ENCODE measurements at regions of chr15 and their contacts with region 1.

Region 1: GRCh38 chr15:85702321-85703101 is 92.2 kb downstream of the KLHL25 start:
- DNase-seq: peak in 5 of 9 experiments; percentile 17 to 88 (median 39)
- ATAC-seq: peak; percentile 40
- H3K4me3 ChIP-seq: peak overlapping the region; percentile 3 to 24
- H3K4me3 Mint-ChIP-seq: peak overlapping the region; percentile 70
- H3K27ac ChIP-seq: peak overlapping the region; percentile 70 to 97
- H3K27ac Mint-ChIP-seq: peak overlapping the region; percentile 94
- H3K4me1 ChIP-seq: peaks cover 64% of the 10 kb centered on the region
- H3K4me1 Mint-ChIP-seq: peaks cover 78% of the 10 kb centered on the region
- H3K27me3 ChIP-seq: no peaks in the 10 kb centered on the region
- H3K27me3 Mint-ChIP-seq: no peaks in the 10 kb centered on the region
- CTCF ChIP-seq: no peak

Region 2: DNA sequence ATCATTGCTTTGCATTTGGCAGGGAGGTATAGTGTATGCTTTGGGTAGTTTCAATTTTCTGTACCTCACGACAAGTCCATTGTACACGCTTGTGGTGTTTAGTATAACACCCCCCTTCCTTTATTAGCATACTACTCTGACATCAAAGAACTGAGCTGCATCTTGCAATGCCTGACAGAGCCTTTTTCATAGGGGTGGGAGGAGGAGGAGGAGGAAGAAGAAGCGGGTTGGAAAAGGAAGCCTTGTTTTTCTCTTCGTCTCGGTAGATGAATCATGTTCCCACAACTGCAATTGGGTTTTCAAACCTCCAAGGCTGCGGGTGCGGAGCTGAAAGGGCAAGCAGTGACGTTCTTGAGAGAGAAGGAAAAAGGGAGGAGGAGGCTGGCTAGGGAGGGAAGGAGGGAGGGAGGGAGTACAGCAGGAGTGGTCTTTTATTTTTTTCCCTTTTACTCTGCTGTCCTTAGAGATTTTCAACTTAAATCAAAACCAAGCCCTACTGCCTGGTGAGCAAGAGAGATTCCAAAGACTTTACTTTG is 83.5 kb before region 1 on chr15:
- CTCF ChIA-PET with region 1: interaction called, 3 read pairs
- POLR2A ChIA-PET with region 1: no interaction called
- intact Hi-C with region 1: loop called in 1 of 2 experiments (anchors 1 kb)
- DNase-seq: peak in 8 of 9 experiments; percentile 30 to 82 (median 59)
- ATAC-seq: peak; percentile 84
- H3K4me3 ChIP-seq: peak overlapping the region in 1 of 2 experiments; percentile 27
- H3K4me3 Mint-ChIP-seq: no peak overlapping the region
- H3K27ac ChIP-seq: peak overlapping the region in 1 of 2 experiments; percentile 58
- H3K27ac Mint-ChIP-seq: no peak overlapping the region
- H3K4me1 ChIP-seq: peaks cover 38% of the 10 kb centered on the region
- H3K4me1 Mint-ChIP-seq: peaks cover 32% of the 10 kb centered on the region
- H3K27me3 ChIP-seq: no peaks in the 10 kb centered on the region
- H3K27me3 Mint-ChIP-seq: no peaks in the 10 kb centered on the region
- CTCF ChIP-seq: no peak

Region 3: GRCh38 chr15:85646538-85647091 is 55.9 kb before region 1 on chr15:
- CTCF ChIA-PET with region 1: no interaction called
- POLR2A ChIA-PET with region 1: interaction called, 14 read pairs
- intact Hi-C with region 1: no loop called
- DNase-seq: peak in 7 of 9 experiments; percentile 17 to 91 (median 54)
- ATAC-seq: peak; percentile 89
- H3K4me3 ChIP-seq: no peak overlapping the region
- H3K4me3 Mint-ChIP-seq: peak overlapping the region; percentile 40
- H3K27ac ChIP-seq: peak overlapping the region; percentile 5 to 72
- H3K27ac Mint-ChIP-seq: peak overlapping the region; percentile 79
- H3K4me1 ChIP-seq: peaks cover 22% of the 10 kb centered on the region
- H3K4me1 Mint-ChIP-seq: peaks cover 44% of the 10 kb centered on the region
- H3K27me3 ChIP-seq: no peaks in the 10 kb centered on the region
- H3K27me3 Mint-ChIP-seq: no peaks in the 10 kb centered on the region
- CTCF ChIP-seq: no peak

Region 4: DNA sequence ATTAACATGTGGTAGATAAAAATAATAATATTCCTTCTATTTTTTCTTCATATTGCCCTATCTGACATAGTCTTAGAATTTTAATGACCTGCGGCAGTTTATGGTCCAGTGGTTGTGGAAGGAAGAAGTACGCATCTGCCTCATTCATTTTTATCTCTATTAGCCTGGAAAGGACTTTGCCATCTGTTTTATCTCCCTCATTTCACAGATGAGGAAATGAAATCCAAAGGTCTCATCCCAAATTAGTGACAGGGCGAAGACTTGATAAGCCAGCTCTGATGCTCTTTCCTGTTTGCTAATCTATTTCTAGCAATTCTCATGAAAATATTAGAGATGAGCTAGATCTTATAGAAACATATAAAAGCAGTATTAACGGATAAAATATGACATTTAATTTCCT is 21.1 kb before region 1 on chr15:
- CTCF ChIA-PET with region 1: no interaction called
- POLR2A ChIA-PET with region 1: no interaction called
- intact Hi-C with region 1: no loop called
- DNase-seq: no peak
- ATAC-seq: no peak
- H3K4me3 ChIP-seq: no peak overlapping the region
- H3K4me3 Mint-ChIP-seq: no peak overlapping the region
- H3K27ac ChIP-seq: no peak overlapping the region
- H3K27ac Mint-ChIP-seq: no peak overlapping the region
- H3K4me1 ChIP-seq: no peaks in the 10 kb centered on the region
- H3K4me1 Mint-ChIP-seq: peaks cover 3% of the 10 kb centered on the region
- H3K27me3 ChIP-seq: no peaks in the 10 kb centered on the region
- H3K27me3 Mint-ChIP-seq: no peaks in the 10 kb centered on the region
- CTCF ChIP-seq: no peak

Region 5: DNA sequence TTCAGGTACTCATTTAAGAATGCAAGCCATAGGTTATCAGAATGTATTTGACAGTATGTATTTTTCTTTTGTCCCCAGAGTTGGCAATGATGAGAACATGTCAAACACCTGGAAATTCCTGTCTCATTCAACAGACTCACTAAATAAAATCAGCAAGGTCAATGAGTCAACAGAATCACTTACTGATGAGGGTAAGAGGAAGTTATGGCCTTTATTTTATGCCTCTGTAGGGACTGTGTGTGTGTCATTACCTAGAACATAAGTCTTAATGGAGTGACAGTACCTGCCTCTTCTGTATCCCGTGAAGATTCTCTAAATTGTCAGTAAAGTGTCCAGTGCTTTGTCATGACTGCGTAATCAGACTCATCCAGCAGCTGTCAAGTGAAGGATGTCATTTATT is 14.7 kb after region 1 on chr15:
- CTCF ChIA-PET with region 1: interaction called, 3 read pairs
- POLR2A ChIA-PET with region 1: no interaction called
- intact Hi-C with region 1: loop called in 1 of 2 experiments (anchors 2 kb)
- DNase-seq: no peak
- ATAC-seq: no peak
- H3K4me3 ChIP-seq: no peak overlapping the region
- H3K4me3 Mint-ChIP-seq: no peak overlapping the region
- H3K27ac ChIP-seq: peak overlapping the region in 1 of 2 experiments; percentile 33
- H3K27ac Mint-ChIP-seq: peak overlapping the region; percentile 84
- H3K4me1 ChIP-seq: no peaks in the 10 kb centered on the region
- H3K4me1 Mint-ChIP-seq: peaks cover 37% of the 10 kb centered on the region
- H3K27me3 ChIP-seq: no peaks in the 10 kb centered on the region
- H3K27me3 Mint-ChIP-seq: no peaks in the 10 kb centered on the region
- CTCF ChIP-seq: no peak

Region 6: GRCh38 chr15:86183596-86184491 is 481.3 kb after region 1 on chr15:
- CTCF ChIA-PET with region 1: no interaction called
- POLR2A ChIA-PET with region 1: no interaction called
- intact Hi-C with region 1: no loop called
- DNase-seq: no peak
- ATAC-seq: no peak
- H3K4me3 ChIP-seq: no peak overlapping the region
- H3K4me3 Mint-ChIP-seq: no peak overlapping the region
- H3K27ac ChIP-seq: no peak overlapping the region
- H3K27ac Mint-ChIP-seq: no peak overlapping the region
- H3K4me1 ChIP-seq: no peaks in the 10 kb centered on the region
- H3K4me1 Mint-ChIP-seq: no peaks in the 10 kb centered on the region
- H3K27me3 ChIP-seq: no peaks in the 10 kb centered on the region
- H3K27me3 Mint-ChIP-seq: peaks cover 5% of the 10 kb centered on the region
- CTCF ChIP-seq: no peak

Measured in CD8-positive, alpha-beta T cell (primary cell).